ENCODE measurements at regions of chr21 and their contacts with region 1.

Region 1: DNA sequence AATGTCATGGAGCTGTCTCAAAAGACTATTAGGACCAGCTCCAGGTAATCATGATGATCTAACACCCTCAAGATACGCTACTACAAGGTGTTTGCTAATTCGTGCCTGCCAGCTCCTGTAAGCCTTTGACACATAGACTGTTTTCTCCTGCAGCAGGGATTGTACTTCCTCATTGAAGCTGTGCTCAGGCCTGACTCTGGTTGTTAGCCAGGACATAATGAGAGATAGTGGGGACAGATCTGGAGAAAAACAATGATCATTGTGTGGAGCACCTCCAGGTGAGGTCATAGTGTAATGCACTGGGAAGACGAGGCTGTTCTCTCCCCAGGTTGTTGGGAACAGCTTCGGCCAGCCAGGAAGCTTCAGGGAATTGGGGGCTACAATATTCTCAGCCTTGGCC is 94.6 kb downstream of the SETD4 start:
- DNase-seq: no peak
- H3K4me3 ChIP-seq: no peak overlapping the region
- H3K27ac ChIP-seq: no peak overlapping the region
- H3K4me1 ChIP-seq: no peaks in the 10 kb centered on the region
- H3K27me3 ChIP-seq: no peaks in the 10 kb centered on the region
- CTCF ChIP-seq: no peak
- POLR2A ChIP-seq: no peak

Region 2: DNA sequence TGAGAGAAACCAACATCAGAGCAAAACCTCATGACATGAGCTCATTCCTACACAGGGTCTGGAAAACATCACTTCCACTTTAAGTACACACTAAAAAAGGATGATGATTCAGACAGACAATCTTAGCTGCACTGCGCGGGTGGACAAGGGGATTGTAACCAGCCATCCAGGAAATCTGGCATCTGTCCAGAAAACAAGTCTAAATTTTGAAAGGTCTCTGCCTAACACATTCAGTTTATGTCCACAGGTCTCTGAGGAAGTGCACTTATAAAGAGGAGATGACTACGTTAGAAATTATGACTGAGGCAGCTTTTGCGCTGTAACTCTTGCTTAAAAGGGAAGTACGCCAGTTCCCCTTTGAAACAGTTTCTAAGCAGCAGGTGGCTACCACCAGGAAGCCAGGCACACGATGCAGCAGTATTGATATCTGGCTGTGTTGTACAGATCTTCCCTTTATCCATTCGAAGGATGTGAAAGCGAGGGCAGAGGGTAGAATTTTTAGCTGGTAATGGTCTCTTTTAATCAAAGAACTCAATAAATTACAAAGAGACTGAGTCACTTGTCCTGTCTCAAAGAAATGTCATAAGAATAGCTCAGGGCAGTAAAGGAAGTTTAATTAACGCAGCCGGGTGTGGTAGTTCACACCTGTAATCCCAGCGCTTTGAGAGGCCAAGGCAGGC is 33.3 kb before region 1 on chr21:
- intact Hi-C with region 1: loop called (anchors 2 kb)
- DNase-seq: peak in 1 of 2 donors; percentile 38
- H3K4me3 ChIP-seq: no peak overlapping the region
- H3K27ac ChIP-seq: peak overlapping the region; percentile 40 to 69
- H3K4me1 ChIP-seq: peaks cover 2 to 3% of the 10 kb centered on the region in 2 donors
- H3K27me3 ChIP-seq: no peaks in the 10 kb centered on the region
- CTCF ChIP-seq: no peak
- POLR2A ChIP-seq: no peak

Measured in breast epithelium (tissue), 4 donors.